Activated B cell treated with CpG ODN at 0.5 μM for 24 hours (primary cell): ENCODE measurements at regions of chr20 and their contacts with region 1.

Region 1: GRCh38 chr20:32779500-32780211 is 17.5 kb downstream of the DNMT3B start:
- DNase-seq: no peak
- ATAC-seq: no peak
- H3K4me3 Mint-ChIP-seq: no peak overlapping the region
- H3K27ac Mint-ChIP-seq: no peak overlapping the region
- H3K4me1 Mint-ChIP-seq: peaks cover 4% of the 10 kb centered on the region
- H3K27me3 Mint-ChIP-seq: no peaks in the 10 kb centered on the region
- CTCF ChIP-seq: no peak

Region 2: DNA sequence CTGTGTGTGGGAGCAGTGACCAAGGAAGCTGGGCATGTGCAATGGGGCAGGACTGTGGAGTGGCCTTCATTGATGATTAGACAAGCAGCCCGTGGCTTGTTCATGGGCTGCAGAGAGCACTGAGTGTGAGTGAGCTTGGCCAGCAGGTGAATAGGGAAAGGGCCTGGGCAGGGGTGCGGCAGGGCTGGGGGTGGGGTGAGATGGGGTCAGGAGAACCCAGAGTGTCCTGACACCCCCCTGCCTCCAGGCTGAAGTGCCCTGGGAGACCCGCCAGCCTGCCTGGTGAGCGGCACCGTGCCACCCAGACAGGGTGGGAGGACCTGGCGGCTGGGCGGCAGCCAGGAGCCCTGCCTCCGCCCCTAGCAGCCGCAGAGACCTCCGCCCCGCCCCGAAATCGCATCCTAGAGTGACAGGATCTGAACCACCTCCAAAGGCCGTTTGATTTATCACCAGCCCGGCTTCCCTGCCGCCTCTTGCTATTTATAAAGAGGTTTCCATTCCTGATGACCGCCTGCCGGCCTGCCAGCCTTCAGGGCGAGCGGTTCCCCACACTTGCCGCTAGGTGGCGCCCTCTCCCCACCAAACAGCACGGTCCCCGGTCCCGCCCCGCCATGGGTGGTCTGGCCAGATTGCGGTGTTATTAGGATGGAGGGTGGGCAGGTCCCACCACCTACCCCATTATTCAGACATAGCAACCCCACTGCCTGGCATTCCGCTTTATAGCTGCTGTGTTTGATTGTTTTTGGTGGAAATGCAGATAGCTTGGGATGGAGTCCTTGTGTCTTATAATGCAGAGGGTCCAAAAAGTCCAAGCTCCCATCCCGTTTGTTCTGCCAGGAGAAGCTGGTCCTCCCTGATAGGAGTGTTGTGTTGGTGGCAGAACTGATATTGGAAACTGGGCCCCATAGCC is 957.0 kb before region 1 on chr20:
- CTCF ChIA-PET with region 1: interaction called, 3 read pairs
- POLR2A ChIA-PET with region 1: no interaction called
- intact Hi-C with region 1: loop called (anchors 2 kb)
- DNase-seq: peak; percentile 79
- ATAC-seq: peak; percentile 97
- H3K4me3 Mint-ChIP-seq: no peak overlapping the region
- H3K27ac Mint-ChIP-seq: no peak overlapping the region
- H3K4me1 Mint-ChIP-seq: peaks cover 4% of the 10 kb centered on the region
- H3K27me3 Mint-ChIP-seq: no peaks in the 10 kb centered on the region
- CTCF ChIP-seq: peak; percentile 92

Region 3: GRCh38 chr20:32521780-32522525 is 257.7 kb before region 1 on chr20:
- CTCF ChIA-PET with region 1: interaction called, 22 read pairs
- POLR2A ChIA-PET with region 1: interaction called, 3 read pairs
- intact Hi-C with region 1: loop called (anchors 2 kb)
- DNase-seq: peak; percentile 53
- ATAC-seq: peak; percentile 73
- H3K4me3 Mint-ChIP-seq: no peak overlapping the region
- H3K27ac Mint-ChIP-seq: no peak overlapping the region
- H3K4me1 Mint-ChIP-seq: peaks cover 40% of the 10 kb centered on the region
- H3K27me3 Mint-ChIP-seq: no peaks in the 10 kb centered on the region
- CTCF ChIP-seq: no peak

Region 4: GRCh38 chr20:32674362-32674789 is 105.3 kb before region 1 on chr20:
- CTCF ChIA-PET with region 1: interaction called, 78 read pairs
- POLR2A ChIA-PET with region 1: interaction called, 8 read pairs
- intact Hi-C with region 1: no loop called
- DNase-seq: no peak
- ATAC-seq: peak; percentile 38
- H3K4me3 Mint-ChIP-seq: no peak overlapping the region
- H3K27ac Mint-ChIP-seq: peak overlapping the region; percentile 26
- H3K4me1 Mint-ChIP-seq: peaks cover 32% of the 10 kb centered on the region
- H3K27me3 Mint-ChIP-seq: no peaks in the 10 kb centered on the region
- CTCF ChIP-seq: no peak

Region 5: GRCh38 chr20:32743237-32744112 is 36.2 kb before region 1 on chr20 and contains the start of gene COMMD7:
- CTCF ChIA-PET with region 1: interaction called, 3 read pairs
- POLR2A ChIA-PET with region 1: interaction called, 6 read pairs
- intact Hi-C with region 1: loop called (anchors 5 kb)
- DNase-seq: peak; percentile 67
- ATAC-seq: peak; percentile 81
- H3K4me3 Mint-ChIP-seq: peak within 1 kb of the TSS; percentile 94
- H3K27ac Mint-ChIP-seq: peak within 1 kb of the TSS; percentile 89
- H3K4me1 Mint-ChIP-seq: peaks cover 29% of the 10 kb centered on the region
- H3K27me3 Mint-ChIP-seq: no peaks in the 10 kb centered on the region
- CTCF ChIP-seq: no peak
- total RNA-seq, gene COMMD7: 35.5 and 37.9 TPM in 2 replicates

Region 6: DNA sequence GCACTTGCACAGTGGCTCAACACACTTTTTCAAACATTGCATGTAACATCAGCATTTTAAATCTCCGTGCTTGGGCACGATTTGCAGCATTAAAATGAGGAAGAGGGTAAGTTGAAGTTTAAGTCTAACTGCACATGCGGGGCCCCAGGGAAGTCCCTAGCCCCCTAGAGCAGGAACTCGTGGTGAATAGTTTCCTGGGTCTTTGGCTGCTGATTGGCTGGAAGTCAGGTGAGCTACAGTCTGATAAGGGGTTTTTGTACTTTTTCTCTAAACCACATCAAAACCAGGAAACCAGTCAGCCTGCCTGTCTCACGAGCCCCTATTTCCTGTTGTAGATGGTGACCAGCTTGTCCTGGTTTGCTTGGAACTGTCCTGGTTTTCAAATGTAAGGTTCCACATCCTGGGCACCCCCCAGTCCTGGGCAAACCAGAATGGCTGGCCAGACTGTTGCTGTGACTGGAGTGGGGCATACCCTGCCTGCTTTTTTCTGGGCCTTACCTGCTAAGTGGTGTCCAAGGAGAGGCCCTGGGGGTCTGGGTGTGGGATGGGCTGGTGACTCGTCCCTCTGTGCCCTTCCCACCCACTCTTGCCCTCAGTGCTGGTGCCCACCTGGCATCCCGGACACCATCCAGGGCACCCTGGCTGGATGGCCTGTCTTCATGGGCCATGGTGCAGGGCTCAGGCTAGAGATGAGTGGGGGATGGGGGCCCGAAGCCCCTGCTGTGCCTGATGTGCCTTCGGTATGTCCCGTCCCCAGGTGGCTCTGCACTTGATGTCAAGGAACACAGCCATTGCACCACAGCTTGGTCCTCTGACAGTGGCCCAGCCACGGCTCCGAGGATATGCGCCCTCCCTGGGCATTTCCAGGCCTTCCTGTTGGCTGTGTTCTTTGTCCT is 192.8 kb after region 1 on chr20:
- CTCF ChIA-PET with region 1: no interaction called
- POLR2A ChIA-PET with region 1: no interaction called
- intact Hi-C with region 1: no loop called
- DNase-seq: peak; percentile 57
- ATAC-seq: peak; percentile 94
- H3K4me3 Mint-ChIP-seq: no peak overlapping the region
- H3K27ac Mint-ChIP-seq: no peak overlapping the region
- H3K4me1 Mint-ChIP-seq: peaks cover 19% of the 10 kb centered on the region
- H3K27me3 Mint-ChIP-seq: no peaks in the 10 kb centered on the region
- CTCF ChIP-seq: no peak